AG04449 (cell line): ENCODE measurements at regions of chr10 and their contacts with region 1.

Region 1: GRCh38 chr10:74419958-74420375 is 268.9 kb downstream of the ADK start:
- DNase-seq: no peak
- H3K4me3 ChIP-seq: no peak overlapping the region
- CTCF ChIP-seq: peak; percentile 3

Region 2: GRCh38 chr10:74431816-74432215 is 11.8 kb after region 1 on chr10:
- CTCF ChIA-PET with region 1: interaction called, 30 read pairs
- POLR2A ChIA-PET with region 1: no interaction called
- DNase-seq: no peak
- H3K4me3 ChIP-seq: no peak overlapping the region
- CTCF ChIP-seq: no peak

Region 3: GRCh38 chr10:74558403-74558802 is 138.4 kb after region 1 on chr10:
- CTCF ChIA-PET with region 1: no interaction called
- POLR2A ChIA-PET with region 1: no interaction called
- DNase-seq: no peak
- H3K4me3 ChIP-seq: no peak overlapping the region
- CTCF ChIP-seq: no peak

Region 4: DNA sequence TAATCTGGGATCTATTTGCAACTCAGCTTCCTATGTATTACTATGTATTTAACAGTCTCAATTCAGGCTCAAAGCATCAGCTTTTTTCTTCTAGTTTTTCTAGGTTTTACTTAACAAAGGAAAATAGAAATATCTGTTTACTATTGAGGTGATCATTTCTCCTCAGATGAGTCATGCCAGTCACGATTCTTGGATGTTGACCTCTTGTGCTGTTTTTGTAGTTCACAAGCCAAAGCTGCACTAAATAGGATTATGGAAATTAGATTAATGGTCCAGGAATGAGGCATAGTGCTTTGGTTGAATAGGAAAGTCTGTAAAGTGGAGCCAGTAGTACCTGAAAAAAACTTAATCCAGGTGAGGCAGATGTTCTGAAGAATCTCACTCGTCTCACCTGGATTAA is 208.2 kb after region 1 on chr10:
- CTCF ChIA-PET with region 1: no interaction called
- POLR2A ChIA-PET with region 1: no interaction called
- DNase-seq: no peak
- H3K4me3 ChIP-seq: no peak overlapping the region
- CTCF ChIP-seq: no peak